ENCODE measurements at regions of chr1 and their contacts with region 1.

Region 1: DNA sequence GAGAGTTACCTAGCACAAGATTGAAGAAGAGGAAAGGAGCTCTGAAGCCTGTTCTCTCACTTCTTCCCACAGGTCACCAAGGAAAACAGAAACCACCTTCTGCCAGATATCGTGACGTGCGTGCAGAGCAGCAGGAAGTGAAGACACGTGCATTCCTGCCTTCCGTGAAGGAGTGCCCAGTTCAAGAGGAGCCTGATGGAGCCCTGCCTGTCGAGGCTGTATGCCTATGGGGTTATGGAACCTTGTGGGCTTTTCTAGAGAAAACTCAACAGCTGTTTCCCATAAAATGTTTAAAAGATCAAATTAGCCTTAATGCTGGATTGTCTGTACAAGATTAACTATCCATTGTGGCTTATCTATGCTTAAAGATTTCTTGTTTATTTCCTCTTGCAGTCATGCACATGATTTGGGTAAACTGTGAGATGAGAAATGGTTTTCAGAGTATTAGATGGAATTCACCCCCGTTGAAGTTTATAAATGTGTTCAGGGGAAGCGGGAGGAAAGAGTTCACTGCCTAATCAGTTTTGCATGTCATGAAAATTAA is 27.8 kb downstream of the NTPCR start:
- DNase-seq: no peak
- H3K4me3 ChIP-seq: no peak overlapping the region
- H3K27ac ChIP-seq: no peak overlapping the region
- H3K4me1 ChIP-seq: no peaks in the 10 kb centered on the region
- H3K27me3 ChIP-seq: no peaks in the 10 kb centered on the region
- CTCF ChIP-seq: no peak
- POLR2A ChIP-seq: no peak

Region 2: DNA sequence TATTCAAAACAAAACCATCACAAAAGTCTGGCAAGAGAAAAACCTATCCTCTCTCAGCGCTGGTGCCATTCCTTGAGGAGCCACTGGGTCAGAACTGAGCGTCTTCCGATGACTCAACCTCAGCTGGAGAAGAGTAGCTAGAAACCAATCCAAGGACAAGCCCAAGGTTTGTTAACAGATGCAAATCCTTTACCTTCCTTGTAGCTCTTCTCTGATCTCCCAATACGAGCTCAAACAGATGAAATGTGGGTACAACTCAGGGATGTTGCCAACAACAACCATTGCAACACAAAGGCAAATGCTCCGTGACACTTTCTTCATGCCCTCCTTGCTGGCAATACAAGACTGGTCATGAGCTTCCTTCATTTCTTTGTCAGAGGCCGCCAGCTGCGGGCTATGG is 685.3 kb before region 1 on chr1:
- intact Hi-C with region 1: loop called (anchors 10 kb)
- DNase-seq: peak in 1 of 2 donors; percentile 26
- H3K4me3 ChIP-seq: peak overlapping the region in 1 of 3 donors; percentile 10
- H3K27ac ChIP-seq: no peak overlapping the region
- H3K4me1 ChIP-seq: no peaks in the 10 kb centered on the region
- H3K27me3 ChIP-seq: no peaks in the 10 kb centered on the region
- CTCF ChIP-seq: peak in 1 of 3 donors; percentile 26
- POLR2A ChIP-seq: no peak